PC-9 (cell line): ENCODE measurements at regions of chr7 and their contacts with region 1.

Region 1: GRCh38 chr7:143901668-143902331 is at the start of gene TCAF1:
- DNase-seq: peak; percentile 84 to 91
- H3K4me3 ChIP-seq: peak within 1 kb of the TSS; percentile 79
- H3K27ac ChIP-seq: peak within 1 kb of the TSS; percentile 70
- H3K4me1 ChIP-seq: peaks cover 18% of the 10 kb centered on the region
- H3K27me3 ChIP-seq: no peaks in the 10 kb centered on the region
- CTCF ChIP-seq: peak; percentile 69
- total RNA-seq, gene TCAF1: 41.5 and 44.6 TPM in 2 replicates

Region 2: DNA sequence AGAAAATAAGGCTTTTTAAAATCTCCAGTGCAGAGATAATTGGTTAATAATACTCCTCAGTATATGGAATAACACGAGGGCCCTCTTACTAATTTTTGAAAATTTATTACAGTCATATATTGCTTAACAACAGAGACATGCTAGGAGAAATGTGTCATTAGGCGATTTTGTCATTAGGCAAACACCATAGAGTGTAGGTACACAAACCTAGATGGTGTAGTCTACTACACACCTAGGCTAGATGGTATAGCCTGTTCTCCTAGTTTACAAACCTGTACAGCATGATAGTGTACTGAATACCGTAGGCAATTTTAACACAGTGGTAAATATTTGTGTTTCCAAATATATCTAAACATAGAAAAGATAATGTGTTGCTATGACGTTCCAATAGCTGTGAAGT is 65.6 kb after region 1 on chr7:
- CTCF ChIA-PET with region 1: interaction called, 12 read pairs
- POLR2A ChIA-PET with region 1: interaction called, 3 read pairs
- intact Hi-C with region 1: no loop called
- DNase-seq: peak in 1 of 2 experiments; percentile 79
- H3K4me3 ChIP-seq: no peak overlapping the region
- H3K27ac ChIP-seq: no peak overlapping the region
- H3K4me1 ChIP-seq: peaks cover 15% of the 10 kb centered on the region
- H3K27me3 ChIP-seq: no peaks in the 10 kb centered on the region
- CTCF ChIP-seq: no peak

Region 3: DNA sequence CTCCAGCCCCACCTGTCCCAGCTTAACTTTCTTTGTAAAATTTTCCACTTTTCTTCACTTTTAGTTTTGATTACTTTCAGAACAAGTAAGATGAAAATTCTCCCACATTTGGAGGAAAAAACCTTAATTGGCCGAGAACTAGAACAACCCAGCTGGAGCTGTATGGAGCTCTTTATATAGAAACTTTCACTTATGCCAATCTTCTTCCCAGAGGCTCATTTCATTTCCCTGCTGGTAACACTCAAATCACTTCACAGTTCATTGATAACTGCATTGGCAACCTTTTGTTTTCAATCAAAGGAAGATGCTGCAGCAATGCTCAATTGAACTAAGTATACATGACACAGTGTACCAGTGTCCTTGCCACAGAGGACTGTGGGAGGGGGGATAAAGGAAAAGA is 677.9 kb after region 1 on chr7:
- CTCF ChIA-PET with region 1: no interaction called
- POLR2A ChIA-PET with region 1: no interaction called
- intact Hi-C with region 1: no loop called
- DNase-seq: no peak
- H3K4me3 ChIP-seq: no peak overlapping the region
- H3K27ac ChIP-seq: no peak overlapping the region
- H3K4me1 ChIP-seq: no peaks in the 10 kb centered on the region
- H3K27me3 ChIP-seq: no peaks in the 10 kb centered on the region
- CTCF ChIP-seq: no peak

Region 4: DNA sequence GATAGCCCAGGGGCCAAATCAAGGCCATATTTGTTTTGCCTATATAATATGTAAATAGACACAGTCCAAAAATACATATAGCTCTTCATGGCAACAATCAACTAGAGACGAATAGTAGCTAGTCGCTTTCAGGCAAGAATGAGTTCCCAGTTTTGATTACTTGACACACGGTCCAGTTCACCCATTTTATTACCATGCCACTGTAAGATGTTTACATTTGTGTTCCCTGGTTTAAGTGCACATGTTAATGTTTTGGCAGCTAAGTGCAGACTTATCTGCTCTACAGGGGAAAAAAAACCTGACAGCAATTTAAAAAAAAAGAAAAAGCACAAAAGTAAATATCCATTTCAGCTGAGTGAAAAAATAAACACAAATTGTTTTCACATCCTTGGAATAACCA is 720.9 kb after region 1 on chr7:
- CTCF ChIA-PET with region 1: no interaction called
- POLR2A ChIA-PET with region 1: interaction called, 27 read pairs
- intact Hi-C with region 1: no loop called
- DNase-seq: no peak
- H3K4me3 ChIP-seq: no peak overlapping the region
- H3K27ac ChIP-seq: no peak overlapping the region
- H3K4me1 ChIP-seq: no peaks in the 10 kb centered on the region
- H3K27me3 ChIP-seq: no peaks in the 10 kb centered on the region
- CTCF ChIP-seq: no peak